Activated CD4-positive, alpha-beta T cell treated with anti-CD3 and anti-CD28 coated beads for 36 hours (primary cell): ENCODE measurements at regions of chrX and their contacts with region 1.

Region 1: GRCh38 chrX:16870095-16870860 is at the start of gene RBBP7:
- DNase-seq: peak; percentile 93
- ATAC-seq: peak; percentile 84
- H3K4me3 Mint-ChIP-seq: peak within 1 kb of the TSS; percentile 93
- H3K27ac Mint-ChIP-seq: peak within 1 kb of the TSS; percentile 95
- H3K4me1 Mint-ChIP-seq: peaks cover 24% of the 10 kb centered on the region
- H3K27me3 Mint-ChIP-seq: peaks cover 2% of the 10 kb centered on the region
- total RNA-seq, gene RBBP7: 198 to 238 TPM

Region 2: DNA sequence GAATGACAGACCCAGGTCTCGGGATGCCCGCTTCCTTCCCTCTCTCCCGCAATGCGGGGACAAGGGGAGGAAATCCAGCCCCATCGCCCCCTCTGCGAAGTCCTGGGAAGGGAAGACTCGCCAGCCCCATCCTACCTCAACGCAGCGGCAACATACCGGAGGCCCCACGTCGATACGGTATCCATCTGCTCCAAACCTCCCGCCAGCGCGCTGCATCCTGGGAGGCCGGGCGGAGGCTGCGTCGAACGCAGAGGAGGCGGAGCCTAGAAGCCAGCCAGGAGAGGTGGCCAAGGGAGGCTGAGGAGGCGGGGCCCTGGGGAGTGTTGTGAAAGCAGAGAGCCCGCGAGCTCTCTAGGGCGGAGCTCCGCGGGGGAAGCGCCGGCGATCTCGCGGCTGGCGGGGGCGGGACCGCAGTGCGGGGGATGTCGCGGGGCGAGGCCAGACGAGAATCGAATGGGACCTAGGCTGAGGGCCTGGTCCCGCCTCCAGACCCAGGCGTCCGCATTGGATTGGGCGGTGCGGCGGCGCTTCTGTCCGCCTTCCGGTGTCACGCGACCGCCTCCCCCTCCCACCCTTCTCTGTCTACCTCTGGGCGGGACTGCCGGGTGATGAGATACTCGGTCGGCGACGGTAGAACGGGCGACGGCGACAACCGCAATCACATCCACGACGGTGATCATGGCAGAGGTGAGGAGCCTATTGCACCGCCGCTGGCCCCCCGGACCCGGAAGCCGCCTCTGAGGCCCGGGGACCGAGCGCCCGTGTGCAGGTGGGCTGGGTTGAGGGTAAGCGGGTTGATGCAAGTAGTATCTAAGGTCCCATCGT is 1997.2 kb before region 1 on chrX and contains the starts of genes FANCB and MOSPD2:
- CTCF ChIA-PET with region 1: no interaction called
- POLR2A ChIA-PET with region 1: no interaction called
- intact Hi-C with region 1: loop called in 1 of 2 experiments (anchors 5 kb)
- DNase-seq: peak; percentile 95
- ATAC-seq: peak; percentile 96
- H3K4me3 Mint-ChIP-seq: peak within 1 kb of the TSS; percentile 78
- H3K27ac Mint-ChIP-seq: peak within 1 kb of the TSS; percentile 76
- H3K4me1 Mint-ChIP-seq: peaks cover 17% of the 10 kb centered on the region
- H3K27me3 Mint-ChIP-seq: no peaks in the 10 kb centered on the region
- total RNA-seq, gene FANCB: 14.7 to 15.4 TPM
- total RNA-seq, gene MOSPD2: 18.9 to 24.5 TPM

Region 3: DNA sequence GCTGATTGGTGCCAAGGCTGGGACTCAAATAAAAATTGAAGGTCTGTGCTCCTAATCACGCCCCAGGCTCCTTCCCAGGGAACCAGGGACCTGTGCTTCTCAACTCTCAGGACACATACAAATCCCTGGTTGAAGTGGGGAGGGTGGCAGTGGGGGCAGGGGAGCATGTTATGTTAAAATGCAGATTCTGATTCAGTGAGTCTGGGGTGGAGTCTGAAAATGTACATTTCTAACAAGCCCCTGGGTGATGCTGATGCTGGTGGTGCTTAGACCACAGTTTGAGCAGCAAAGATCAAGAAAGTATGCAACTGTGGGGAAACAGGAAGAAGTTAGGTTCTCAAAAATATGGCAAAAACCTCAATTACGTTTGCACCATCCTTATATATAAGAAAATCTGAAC is 466.5 kb before region 1 on chrX:
- CTCF ChIA-PET with region 1: no interaction called
- POLR2A ChIA-PET with region 1: no interaction called
- intact Hi-C with region 1: no loop called
- DNase-seq: no peak
- ATAC-seq: no peak
- H3K4me3 Mint-ChIP-seq: no peak overlapping the region
- H3K27ac Mint-ChIP-seq: no peak overlapping the region
- H3K4me1 Mint-ChIP-seq: no peaks in the 10 kb centered on the region
- H3K27me3 Mint-ChIP-seq: peaks cover 5% of the 10 kb centered on the region

Region 4: DNA sequence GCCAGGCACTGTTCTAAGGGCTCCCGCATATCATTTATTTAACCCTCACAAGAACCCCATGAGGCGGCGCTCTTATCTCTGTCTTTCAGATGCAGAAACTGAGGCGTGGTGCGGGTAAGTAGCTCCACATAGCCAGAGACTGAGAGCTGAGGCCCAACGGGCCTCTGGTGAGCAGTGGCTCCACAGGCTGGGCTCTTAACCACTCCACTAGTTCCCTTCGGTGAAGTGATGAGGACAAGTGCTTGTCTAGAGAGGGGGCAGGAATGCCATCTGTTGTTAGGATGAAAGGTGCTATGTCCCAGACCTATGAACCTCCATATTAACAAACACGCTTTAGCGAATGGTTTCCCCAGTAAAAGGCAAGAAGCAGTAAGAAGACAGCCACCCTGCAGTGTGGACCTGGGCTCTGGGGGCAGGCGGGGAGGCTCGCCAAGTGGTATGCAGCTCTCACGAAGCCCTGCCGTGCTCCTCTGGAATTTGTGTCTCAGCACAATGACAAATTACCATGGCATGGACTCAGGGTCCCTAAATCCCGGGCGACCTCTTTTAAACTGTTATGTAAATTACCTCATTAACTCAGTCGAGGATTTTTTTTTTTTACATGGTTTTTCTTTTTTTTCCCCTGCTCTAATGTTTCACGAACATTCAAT is 241.2 kb before region 1 on chrX:
- CTCF ChIA-PET with region 1: no interaction called
- POLR2A ChIA-PET with region 1: no interaction called
- intact Hi-C with region 1: no loop called
- DNase-seq: no peak
- ATAC-seq: no peak
- H3K4me3 Mint-ChIP-seq: no peak overlapping the region
- H3K27ac Mint-ChIP-seq: no peak overlapping the region
- H3K4me1 Mint-ChIP-seq: peaks cover 2% of the 10 kb centered on the region
- H3K27me3 Mint-ChIP-seq: no peaks in the 10 kb centered on the region

Region 5: DNA sequence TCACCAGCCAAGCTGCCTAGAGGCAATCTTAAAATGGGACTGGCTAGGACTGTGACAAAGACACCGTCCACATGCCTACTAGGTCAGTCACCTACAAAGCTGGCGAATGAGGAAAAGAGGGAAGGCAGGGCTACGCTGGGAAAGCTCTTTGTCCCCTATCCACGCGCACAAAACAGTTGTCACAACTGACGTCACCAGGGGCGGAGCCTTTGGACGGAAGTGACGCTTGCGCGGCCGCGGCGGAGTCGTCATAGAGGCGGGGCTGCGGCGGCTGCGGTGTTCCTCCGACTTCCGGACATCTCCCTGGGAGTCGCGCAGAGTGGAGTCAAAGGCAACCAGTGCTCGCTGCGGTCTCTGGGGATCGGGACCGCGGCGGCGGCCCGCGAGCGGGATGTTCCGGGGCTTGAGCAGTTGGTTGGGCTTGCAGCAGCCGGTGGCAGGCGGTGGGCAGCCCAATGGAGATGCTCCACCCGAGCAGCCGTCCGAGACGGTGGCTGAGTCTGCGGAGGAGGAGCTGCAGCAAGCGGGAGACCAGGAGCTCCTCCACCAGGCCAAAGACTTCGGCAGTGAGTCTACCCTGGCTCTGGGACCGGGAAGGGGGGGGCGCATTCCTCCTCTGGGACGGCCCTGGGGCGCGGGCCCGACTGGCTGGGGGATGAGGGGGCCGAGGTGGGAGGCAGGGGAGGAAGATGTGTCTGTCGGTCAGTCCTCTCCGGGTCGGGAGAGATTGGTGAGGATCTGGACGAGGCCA is 150.8 kb before region 1 on chrX and contains the start of gene SYAP1:
- CTCF ChIA-PET with region 1: no interaction called
- POLR2A ChIA-PET with region 1: no interaction called
- intact Hi-C with region 1: loop called in 1 of 2 experiments (anchors 2 kb)
- DNase-seq: peak; percentile 94
- ATAC-seq: peak; percentile 96
- H3K4me3 Mint-ChIP-seq: peak within 1 kb of the TSS; percentile 74
- H3K27ac Mint-ChIP-seq: peak within 1 kb of the TSS; percentile 88
- H3K4me1 Mint-ChIP-seq: peaks cover 22% of the 10 kb centered on the region
- H3K27me3 Mint-ChIP-seq: no peaks in the 10 kb centered on the region
- total RNA-seq, gene SYAP1: 22.8 to 31.4 TPM

Region 6: GRCh38 chrX:16826207-16826606 is 44.1 kb before region 1 on chrX:
- CTCF ChIA-PET with region 1: no interaction called
- POLR2A ChIA-PET with region 1: no interaction called
- intact Hi-C with region 1: loop called in 1 of 2 experiments (anchors 2 kb)
- DNase-seq: no peak
- ATAC-seq: peak; percentile 45
- H3K4me3 Mint-ChIP-seq: no peak overlapping the region
- H3K27ac Mint-ChIP-seq: peak overlapping the region; percentile 55
- H3K4me1 Mint-ChIP-seq: peaks cover 16% of the 10 kb centered on the region
- H3K27me3 Mint-ChIP-seq: no peaks in the 10 kb centered on the region

Region 7: DNA sequence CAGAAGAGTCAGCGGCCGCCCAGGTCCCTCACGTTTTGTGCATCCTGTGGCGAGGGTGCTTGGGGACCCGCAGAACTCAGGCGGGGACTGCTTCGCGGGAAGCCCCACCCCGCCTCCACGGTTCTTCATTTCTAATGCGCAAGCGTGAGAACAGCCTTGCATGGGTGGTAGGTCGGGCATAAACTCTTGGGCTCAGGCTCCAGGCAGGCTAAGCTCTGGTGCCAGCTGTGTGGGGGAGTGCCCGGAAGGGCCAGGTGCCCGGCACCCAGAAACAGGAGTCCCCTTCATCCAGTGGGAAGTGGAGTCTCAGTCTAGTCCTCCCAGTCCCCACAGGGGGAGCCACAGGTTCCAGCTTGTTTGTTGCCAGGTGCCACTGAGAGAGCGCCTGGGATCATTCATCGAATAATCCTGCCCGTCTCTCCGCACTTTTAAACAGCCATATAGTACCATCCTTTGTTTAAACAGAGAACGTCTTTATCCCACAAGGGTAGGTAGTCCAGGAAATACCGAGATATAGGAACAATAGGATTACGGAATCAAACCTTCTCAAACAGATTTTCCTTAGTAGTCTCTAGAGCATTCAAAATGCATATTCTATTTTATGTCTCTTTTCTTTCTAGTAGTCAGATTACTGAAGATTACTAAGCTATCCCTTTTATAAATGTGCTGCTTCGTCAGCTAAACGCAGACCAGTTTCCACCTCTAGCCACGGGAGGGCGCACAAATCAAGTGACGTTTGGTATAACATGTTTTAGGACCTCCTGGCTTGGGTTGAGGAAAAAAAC is 12.6 kb after region 1 on chrX:
- CTCF ChIA-PET with region 1: interaction called, 16 read pairs
- POLR2A ChIA-PET with region 1: interaction called, 3 read pairs
- intact Hi-C with region 1: loop called in 1 of 2 experiments (anchors 1 kb)
- DNase-seq: peak; percentile 82
- ATAC-seq: peak; percentile 83
- H3K4me3 Mint-ChIP-seq: peak overlapping the region; percentile 69
- H3K27ac Mint-ChIP-seq: peak overlapping the region; percentile 86
- H3K4me1 Mint-ChIP-seq: no peaks in the 10 kb centered on the region
- H3K27me3 Mint-ChIP-seq: no peaks in the 10 kb centered on the region

Region 8: GRCh38 chrX:18047491-18047890 is 1177.2 kb after region 1 on chrX:
- CTCF ChIA-PET with region 1: no interaction called
- POLR2A ChIA-PET with region 1: no interaction called
- intact Hi-C with region 1: no loop called
- DNase-seq: no peak
- ATAC-seq: no peak
- H3K4me3 Mint-ChIP-seq: no peak overlapping the region
- H3K27ac Mint-ChIP-seq: no peak overlapping the region
- H3K4me1 Mint-ChIP-seq: no peaks in the 10 kb centered on the region
- H3K27me3 Mint-ChIP-seq: peaks cover 2% of the 10 kb centered on the region